MCF 10A (cell line): ENCODE measurements at regions of chr14 and their contacts with region 1.

Region 1: DNA sequence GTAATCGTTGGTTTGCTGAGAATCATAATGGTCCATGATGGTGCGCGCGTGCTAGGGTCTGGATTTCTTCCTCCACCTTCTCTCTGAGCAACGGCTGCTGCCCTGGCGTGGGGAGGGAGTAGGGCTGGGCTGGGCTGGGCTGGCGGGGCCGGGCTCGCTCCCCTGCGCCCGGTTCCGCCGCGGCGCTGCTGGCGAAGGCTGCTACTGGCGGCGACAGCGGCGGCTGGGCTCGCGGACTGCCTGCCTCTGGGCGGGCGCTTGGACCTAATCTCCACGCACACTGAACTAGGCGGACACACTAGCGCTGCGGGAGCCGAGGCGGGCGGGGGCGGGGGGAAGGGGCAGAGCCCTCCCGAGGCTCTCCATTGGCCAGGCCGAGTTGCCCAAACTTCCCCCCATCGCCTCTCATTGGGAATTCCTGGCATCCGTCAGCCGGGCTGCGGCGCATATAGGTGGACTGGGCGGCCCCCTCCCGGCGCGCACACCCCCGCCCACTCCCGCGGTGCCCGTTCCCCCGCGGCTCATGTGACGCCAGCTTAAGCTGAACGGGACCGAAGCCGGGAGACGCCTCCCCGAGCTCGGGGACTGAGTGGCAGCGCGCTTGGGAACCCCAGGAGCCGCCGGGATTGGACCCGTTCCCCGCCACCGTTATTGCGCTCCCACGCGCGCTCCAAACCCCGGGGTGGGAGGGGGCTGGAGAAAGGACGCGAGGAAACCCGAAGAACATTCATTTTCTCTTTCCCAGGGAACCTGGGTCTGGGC is at the start of gene ACTN1:
- DNase-seq: peak; percentile 98
- H3K4me3 Mint-ChIP-seq: peak within 1 kb of the TSS; percentile 78
- H3K27ac Mint-ChIP-seq: peak within 1 kb of the TSS; percentile 95
- H3K4me1 Mint-ChIP-seq: peaks cover 56% of the 10 kb centered on the region
- H3K27me3 Mint-ChIP-seq: no peaks in the 10 kb centered on the region
- CTCF ChIP-seq: no peak
- total RNA-seq, gene ACTN1: 239 and 312 TPM in 2 replicates

Region 2: DNA sequence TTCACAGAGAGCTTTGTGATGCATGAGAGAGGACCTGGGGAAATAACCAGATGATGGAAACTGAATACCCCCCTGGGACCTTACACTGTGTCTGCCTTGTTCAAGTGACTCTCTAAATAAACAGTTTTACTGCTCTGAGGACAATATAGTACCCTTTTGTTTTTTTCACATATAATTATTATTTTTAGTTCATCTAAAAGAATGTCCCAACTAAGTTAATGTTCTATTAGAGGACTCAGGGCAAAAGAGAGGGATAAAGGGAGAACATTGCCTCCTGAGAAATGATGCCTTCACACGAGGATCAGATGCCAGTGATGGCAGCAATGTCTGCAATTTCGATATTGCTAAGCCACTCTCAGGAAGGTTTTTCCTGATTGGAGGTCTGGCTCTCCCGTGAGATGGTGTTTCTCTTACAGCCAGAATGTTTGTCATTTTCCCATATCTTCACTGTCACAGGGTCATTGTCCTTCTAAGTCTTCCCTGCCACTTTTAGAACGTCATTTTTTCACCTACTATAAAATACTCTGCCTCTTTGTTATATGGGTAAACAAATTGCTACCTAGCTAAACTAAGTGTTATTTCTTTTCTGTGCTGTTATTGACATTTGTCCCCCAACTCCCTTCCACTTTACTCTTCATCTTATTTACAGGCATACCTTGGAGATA is 958.1 kb before region 1 on chr14:
- CTCF ChIA-PET with region 1: no interaction called
- POLR2A ChIA-PET with region 1: no interaction called
- intact Hi-C with region 1: no loop called
- DNase-seq: no peak
- H3K4me3 Mint-ChIP-seq: no peak overlapping the region
- H3K27ac Mint-ChIP-seq: no peak overlapping the region
- H3K4me1 Mint-ChIP-seq: no peaks in the 10 kb centered on the region
- H3K27me3 Mint-ChIP-seq: no peaks in the 10 kb centered on the region
- CTCF ChIP-seq: no peak

Region 3: DNA sequence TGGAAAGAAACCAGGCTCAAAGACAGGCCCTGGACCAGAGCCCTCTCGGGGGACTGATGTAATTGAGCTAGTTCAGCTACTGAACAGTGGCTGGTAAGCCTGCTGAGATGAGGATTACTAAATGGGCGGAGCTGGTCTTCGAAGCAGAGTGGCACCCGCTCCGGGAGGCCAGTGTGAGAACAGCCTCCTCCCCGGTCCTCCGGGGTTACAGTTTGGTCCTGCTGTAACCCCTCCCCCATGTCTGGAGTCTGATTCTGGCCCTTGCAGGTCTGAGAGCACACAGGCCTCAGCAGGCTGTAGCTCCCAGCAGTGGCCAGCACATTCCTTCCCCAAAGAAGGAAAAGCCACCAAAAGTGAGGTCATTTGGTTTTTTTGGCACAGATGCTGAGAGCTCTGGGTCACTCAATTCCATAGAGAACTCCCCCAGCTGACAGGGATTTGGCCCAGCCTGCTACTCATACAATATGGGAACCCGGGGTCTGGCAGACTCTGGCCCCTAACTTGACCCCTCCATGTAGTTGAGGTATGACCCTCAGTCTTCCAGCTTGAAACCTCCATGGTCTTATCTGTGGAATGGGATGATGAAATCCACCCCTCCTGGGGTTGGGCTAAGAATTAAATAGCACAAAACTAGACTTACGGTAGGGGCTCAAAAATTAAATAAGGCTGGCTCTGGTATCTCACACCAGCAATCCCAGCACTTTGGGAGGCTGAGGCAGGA is 39.1 kb before region 1 on chr14:
- CTCF ChIA-PET with region 1: interaction called, 28 read pairs
- POLR2A ChIA-PET with region 1: interaction called, 40 read pairs
- intact Hi-C with region 1: loop called (anchors 1 kb)
- DNase-seq: peak; percentile 94
- H3K4me3 Mint-ChIP-seq: no peak overlapping the region
- H3K27ac Mint-ChIP-seq: peak overlapping the region; percentile 88
- H3K4me1 Mint-ChIP-seq: peaks cover 59% of the 10 kb centered on the region
- H3K27me3 Mint-ChIP-seq: no peaks in the 10 kb centered on the region
- CTCF ChIP-seq: no peak

Region 4: GRCh38 chr14:68951042-68951914 is 27.9 kb before region 1 on chr14:
- CTCF ChIA-PET with region 1: interaction called, 10 read pairs
- POLR2A ChIA-PET with region 1: interaction called, 108 read pairs
- intact Hi-C with region 1: loop called (anchors 2 kb)
- DNase-seq: peak; percentile 100
- H3K4me3 Mint-ChIP-seq: peak overlapping the region; percentile 56
- H3K27ac Mint-ChIP-seq: peak overlapping the region; percentile 95
- H3K4me1 Mint-ChIP-seq: peaks cover 75% of the 10 kb centered on the region
- H3K27me3 Mint-ChIP-seq: no peaks in the 10 kb centered on the region
- CTCF ChIP-seq: no peak

Region 5: DNA sequence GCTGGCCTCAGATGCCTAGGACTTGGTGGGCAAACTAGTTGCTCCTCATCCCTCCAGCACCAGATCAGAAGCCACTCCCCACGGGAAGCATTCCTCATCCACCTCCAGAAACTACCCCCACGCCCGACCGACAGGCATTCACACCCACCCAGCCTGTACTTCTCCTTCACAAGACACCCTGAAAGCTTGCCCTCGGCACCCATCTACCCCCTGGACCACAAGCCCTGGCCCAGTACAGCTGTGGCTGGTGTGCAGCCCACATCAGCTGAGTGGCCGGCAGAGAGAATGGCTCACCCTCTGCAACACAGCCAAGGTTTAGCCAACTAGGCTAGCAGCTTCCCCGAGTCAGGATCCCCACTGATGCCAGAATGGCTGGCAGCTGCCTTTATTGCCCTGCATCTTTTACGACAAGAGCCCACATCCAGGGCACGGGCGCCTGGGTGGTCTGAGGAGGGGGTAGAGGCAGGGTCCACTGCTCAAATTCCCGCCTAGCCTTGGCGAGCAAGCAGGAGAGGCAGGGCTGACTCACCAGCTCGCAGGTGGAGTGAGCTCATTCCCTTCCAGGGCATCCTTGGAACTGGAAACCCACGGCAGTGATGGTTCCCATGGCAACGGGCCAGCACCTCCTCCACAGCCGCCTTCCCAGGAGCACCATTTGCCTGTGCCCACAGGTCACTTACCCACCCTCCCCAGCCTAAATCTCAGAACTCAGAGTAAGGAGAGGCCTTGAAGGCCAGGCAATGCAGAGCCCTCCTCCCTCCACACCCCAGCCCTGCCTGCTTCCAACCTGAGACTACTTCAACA is 17.2 kb before region 1 on chr14:
- CTCF ChIA-PET with region 1: interaction called, 9 read pairs
- POLR2A ChIA-PET with region 1: interaction called, 60 read pairs
- intact Hi-C with region 1: no loop called
- DNase-seq: peak; percentile 87
- H3K4me3 Mint-ChIP-seq: no peak overlapping the region
- H3K27ac Mint-ChIP-seq: peak overlapping the region; percentile 85
- H3K4me1 Mint-ChIP-seq: peaks cover 51% of the 10 kb centered on the region
- H3K27me3 Mint-ChIP-seq: no peaks in the 10 kb centered on the region
- CTCF ChIP-seq: no peak

Region 6: GRCh38 chr14:69090187-69090789 is 111.1 kb after region 1 on chr14:
- CTCF ChIA-PET with region 1: interaction called, 4 read pairs
- POLR2A ChIA-PET with region 1: interaction called, 4 read pairs
- intact Hi-C with region 1: loop called (anchors 2 kb)
- DNase-seq: peak; percentile 65
- H3K4me3 Mint-ChIP-seq: no peak overlapping the region
- H3K27ac Mint-ChIP-seq: no peak overlapping the region
- H3K4me1 Mint-ChIP-seq: peaks cover 28% of the 10 kb centered on the region
- H3K27me3 Mint-ChIP-seq: no peaks in the 10 kb centered on the region
- CTCF ChIP-seq: peak; percentile 80

Region 7: GRCh38 chr14:69101331-69101826 is 122.2 kb after region 1 on chr14:
- CTCF ChIA-PET with region 1: no interaction called
- POLR2A ChIA-PET with region 1: no interaction called
- intact Hi-C with region 1: loop called (anchors 1 kb)
- DNase-seq: peak; percentile 87
- H3K4me3 Mint-ChIP-seq: no peak overlapping the region
- H3K27ac Mint-ChIP-seq: peak overlapping the region; percentile 64
- H3K4me1 Mint-ChIP-seq: peaks cover 12% of the 10 kb centered on the region
- H3K27me3 Mint-ChIP-seq: no peaks in the 10 kb centered on the region
- CTCF ChIP-seq: peak; percentile 48